Activated naive CD8-positive, alpha-beta T cell treated with anti-CD3 and anti-CD28 coated beads, Interleukin-2, amount 10 ng/mL, durations not matched to agents 7 days and 5 days (primary cell): ENCODE measurements at regions of chr17 and their contacts with region 1.

Region 1: DNA sequence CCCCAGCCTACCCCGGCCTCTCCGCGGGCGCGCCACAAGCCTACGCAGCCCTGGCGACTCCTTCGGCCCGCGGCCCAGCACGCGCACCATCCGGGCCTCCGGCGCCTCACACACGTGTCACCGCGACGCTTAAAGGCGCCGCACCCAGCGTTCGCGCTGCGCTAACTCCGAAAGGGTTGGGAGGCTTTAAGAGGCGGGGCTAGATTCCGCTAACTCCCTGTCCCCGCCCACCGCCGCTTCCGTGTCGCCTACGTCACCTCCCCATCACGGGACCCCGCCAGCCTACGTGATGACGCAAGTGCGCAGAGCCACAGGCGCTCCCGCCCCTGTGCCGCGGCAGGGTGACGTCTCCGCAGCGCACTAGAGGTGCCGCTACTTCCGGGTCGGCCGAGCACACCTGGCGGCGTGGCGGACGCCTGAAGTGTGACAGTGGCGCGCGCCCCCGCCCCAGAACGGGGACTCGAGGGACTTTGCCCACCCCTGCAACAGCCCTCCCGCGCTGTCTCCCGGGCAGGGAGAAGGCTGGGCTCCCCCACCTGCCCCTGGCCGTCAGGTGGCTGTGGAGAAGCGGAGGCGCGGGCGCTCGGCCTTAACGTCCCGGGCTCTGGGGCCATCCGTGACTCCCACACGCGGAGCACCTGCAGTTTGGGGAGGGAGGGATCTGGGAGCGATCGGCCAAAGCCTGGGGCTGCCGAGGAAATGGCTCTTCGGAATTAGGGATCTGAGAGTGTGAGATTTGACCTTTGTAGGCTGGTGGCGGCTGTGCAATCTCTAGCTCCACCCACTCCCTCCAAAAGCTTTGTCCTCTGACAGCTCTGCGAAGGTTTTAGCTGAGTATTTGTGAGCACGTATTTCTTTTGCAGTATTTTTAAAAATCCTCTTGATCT is at the start of gene USP36:
- DNase-seq: peak; percentile 99
- ATAC-seq: peak; percentile 88
- H3K4me3 Mint-ChIP-seq: peak within 1 kb of the TSS; percentile 92
- H3K27ac Mint-ChIP-seq: peak within 1 kb of the TSS; percentile 96
- H3K4me1 Mint-ChIP-seq: peaks cover 38% of the 10 kb centered on the region
- H3K27me3 Mint-ChIP-seq: no peaks in the 10 kb centered on the region
- total RNA-seq, gene USP36: 87.8 to 94.3 TPM

Region 2: DNA sequence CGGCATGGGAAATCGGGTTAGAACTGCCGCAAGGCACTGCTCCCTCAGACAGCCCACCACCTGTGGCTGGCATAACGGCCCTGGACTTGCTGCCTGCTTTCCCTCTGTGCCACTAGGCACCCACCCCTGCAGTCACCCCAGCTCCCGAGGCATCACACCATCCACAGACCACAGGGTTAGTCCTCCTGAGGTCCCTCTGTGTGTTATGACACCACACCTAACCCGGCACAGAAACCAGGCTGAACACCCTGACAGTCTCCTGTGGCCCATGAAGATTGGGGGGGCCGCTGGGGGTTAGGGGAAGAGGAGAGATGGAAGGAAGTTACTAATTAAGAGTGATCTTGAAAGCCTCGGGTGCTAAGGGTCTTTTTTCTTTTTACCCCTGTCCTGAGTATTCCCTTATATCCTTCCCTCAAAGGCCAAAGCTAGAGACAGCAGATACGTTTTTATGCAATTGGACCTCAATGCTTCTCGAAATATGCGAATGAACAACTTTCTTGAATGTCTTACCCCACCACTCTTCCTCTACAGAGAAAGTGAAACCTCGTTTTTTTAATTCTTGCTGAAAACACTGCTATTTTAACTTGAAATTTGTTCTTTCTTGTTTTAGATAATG is 65.9 kb before region 1 on chr17:
- POLR2A ChIA-PET with region 1: interaction called, 10 read pairs
- DNase-seq: peak; percentile 75
- ATAC-seq: peak; percentile 64
- H3K4me3 Mint-ChIP-seq: peak overlapping the region; percentile 80
- H3K27ac Mint-ChIP-seq: peak overlapping the region; percentile 93
- H3K4me1 Mint-ChIP-seq: peaks cover 55% of the 10 kb centered on the region
- H3K27me3 Mint-ChIP-seq: no peaks in the 10 kb centered on the region

Region 3: GRCh38 chr17:78818932-78819331 is 22.0 kb before region 1 on chr17:
- POLR2A ChIA-PET with region 1: interaction called, 16 read pairs
- DNase-seq: no peak
- ATAC-seq: peak; percentile 72
- H3K4me3 Mint-ChIP-seq: peak overlapping the region; percentile 78
- H3K27ac Mint-ChIP-seq: peak overlapping the region; percentile 92
- H3K4me1 Mint-ChIP-seq: peaks cover 31% of the 10 kb centered on the region
- H3K27me3 Mint-ChIP-seq: no peaks in the 10 kb centered on the region

Region 4: DNA sequence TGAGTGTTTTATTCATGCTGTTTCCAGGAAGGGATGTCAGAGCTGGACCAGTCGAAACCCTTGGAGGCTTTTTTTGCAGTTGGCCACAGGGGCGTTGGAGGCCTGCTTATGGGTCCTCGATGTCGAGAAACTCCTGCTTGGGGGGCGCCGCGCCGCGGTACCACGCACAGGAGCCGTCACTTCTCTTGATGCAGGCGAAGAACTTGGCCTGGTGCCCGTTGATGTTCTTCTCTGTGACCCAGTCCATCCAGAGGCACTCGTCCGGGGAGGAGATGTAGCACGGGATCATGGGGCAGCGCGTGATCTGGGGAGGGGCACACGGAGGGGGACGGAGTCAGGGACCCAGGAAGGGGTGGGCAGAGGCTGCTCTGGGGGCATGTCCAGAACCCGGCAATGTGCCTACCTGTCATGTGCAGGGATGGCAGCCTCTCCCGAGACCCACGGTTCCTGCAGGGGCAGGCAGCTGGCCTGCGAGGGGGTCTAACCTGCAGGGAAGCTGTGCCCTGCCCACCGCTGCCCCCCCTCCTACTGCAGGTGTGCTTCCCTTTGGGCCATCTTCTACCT is 14.7 kb after region 1 on chr17:
- POLR2A ChIA-PET with region 1: no interaction called
- DNase-seq: no peak
- ATAC-seq: no peak
- H3K4me3 Mint-ChIP-seq: no peak overlapping the region
- H3K27ac Mint-ChIP-seq: no peak overlapping the region
- H3K4me1 Mint-ChIP-seq: no peaks in the 10 kb centered on the region
- H3K27me3 Mint-ChIP-seq: no peaks in the 10 kb centered on the region

Region 5: DNA sequence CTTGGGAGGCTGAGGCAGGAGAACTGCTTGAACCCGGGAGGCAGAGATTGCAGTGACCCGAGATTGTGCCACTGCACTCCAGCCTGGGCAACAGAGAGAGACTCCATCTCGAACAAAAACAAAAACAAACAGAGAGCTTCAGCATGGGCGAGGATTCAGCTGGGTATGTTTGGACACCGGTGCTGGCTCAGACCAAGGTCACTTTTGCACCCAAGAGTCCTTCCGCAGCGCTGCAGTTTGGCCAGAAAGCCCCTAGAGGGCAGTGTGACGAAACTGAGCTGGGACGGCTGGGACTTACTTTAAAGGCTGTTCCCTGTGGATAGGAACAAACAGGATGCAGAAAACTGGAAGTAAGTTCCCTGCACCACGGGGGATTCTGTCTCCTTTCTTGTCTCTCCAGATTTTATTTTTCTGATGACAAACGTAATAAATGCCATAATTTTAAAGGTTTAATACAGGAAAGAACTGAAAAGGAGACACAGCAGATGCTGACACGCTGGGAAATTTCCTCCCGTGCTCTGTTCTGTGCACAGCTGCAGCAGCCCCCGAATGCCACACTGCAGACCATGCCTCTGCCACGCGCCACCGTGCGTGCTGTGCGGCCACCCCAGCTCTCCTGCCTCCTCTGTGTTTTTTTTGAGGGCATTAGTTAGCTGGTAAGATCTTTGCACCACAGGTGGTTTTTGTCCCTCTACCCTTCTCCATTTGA is 24.9 kb after region 1 on chr17:
- POLR2A ChIA-PET with region 1: no interaction called
- DNase-seq: peak; percentile 73
- ATAC-seq: peak; percentile 79
- H3K4me3 Mint-ChIP-seq: no peak overlapping the region
- H3K27ac Mint-ChIP-seq: no peak overlapping the region
- H3K4me1 Mint-ChIP-seq: peaks cover 1% of the 10 kb centered on the region
- H3K27me3 Mint-ChIP-seq: no peaks in the 10 kb centered on the region